ENCODE measurements at regions of chr16 and their contacts with region 1.

Region 1: GRCh38 chr16:85514595-85515318 is 98.4 kb upstream of the GSE1 start:
- DNase-seq: peak; percentile 56
- H3K4me3 ChIP-seq: no peak overlapping the region
- H3K27ac ChIP-seq: peak overlapping the region in 1 of 2 donors; percentile 62
- H3K4me1 ChIP-seq: peaks cover 10% of the 10 kb centered on the region
- H3K27me3 ChIP-seq: no peaks in the 10 kb centered on the region
- CTCF ChIP-seq: no peak
- POLR2A ChIP-seq: no peak

Region 2: GRCh38 chr16:85437166-85438055 is 77.3 kb before region 1 on chr16:
- intact Hi-C with region 1: loop called (anchors 10 kb)
- DNase-seq: peak; percentile 83
- H3K4me3 ChIP-seq: no peak overlapping the region
- H3K27ac ChIP-seq: peak overlapping the region; percentile 61 to 65
- H3K4me1 ChIP-seq: peaks cover 5% of the 10 kb centered on the region
- H3K27me3 ChIP-seq: no peaks in the 10 kb centered on the region
- CTCF ChIP-seq: peak in 1 of 4 experiments; percentile 31
- POLR2A ChIP-seq: peak; percentile 25

Region 3: DNA sequence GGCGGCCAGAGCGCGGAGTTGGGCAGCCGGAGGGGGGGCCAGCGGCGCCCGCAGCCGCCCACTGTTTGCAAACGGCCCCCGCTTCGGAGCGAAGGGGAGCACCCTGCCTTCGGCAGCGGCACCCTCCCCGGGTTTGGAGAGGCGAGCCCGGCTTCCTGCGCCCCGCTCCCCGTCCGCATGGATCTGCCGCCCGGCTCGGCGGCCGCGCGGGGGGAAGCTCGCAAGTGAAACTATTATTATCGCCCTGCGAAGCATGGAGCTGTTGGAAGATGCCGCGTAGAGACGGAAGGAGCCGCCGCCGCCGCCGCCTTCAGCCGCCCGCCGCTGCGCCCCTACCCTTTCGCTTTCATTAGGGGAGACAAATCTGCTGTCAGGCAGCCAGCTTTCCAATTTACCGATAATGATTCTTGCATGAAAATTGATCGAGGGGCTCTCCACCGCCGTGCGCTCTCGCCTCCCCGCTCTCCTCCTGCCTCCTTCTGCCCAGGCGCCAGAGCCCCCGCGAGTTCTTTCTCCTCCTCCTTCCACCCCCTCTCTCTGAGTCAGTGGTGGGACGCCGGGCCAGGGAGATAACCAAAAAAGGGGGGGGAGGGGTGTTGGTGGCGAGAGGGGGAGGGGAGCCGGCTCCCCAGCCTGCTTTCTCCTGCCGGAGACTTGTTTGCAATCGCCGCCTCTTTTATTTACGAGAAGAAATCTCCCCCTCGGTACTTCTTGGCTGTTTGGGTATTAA is 40.2 kb after region 1 on chr16:
- intact Hi-C with region 1: loop called (anchors 2 kb)
- DNase-seq: peak; percentile 38
- H3K4me3 ChIP-seq: peak overlapping the region; percentile 60 to 66
- H3K27ac ChIP-seq: peak overlapping the region; percentile 81 to 83
- H3K4me1 ChIP-seq: peaks cover 18% of the 10 kb centered on the region
- H3K27me3 ChIP-seq: no peaks in the 10 kb centered on the region
- CTCF ChIP-seq: no peak
- POLR2A ChIP-seq: peak; percentile 32

Region 4: DNA sequence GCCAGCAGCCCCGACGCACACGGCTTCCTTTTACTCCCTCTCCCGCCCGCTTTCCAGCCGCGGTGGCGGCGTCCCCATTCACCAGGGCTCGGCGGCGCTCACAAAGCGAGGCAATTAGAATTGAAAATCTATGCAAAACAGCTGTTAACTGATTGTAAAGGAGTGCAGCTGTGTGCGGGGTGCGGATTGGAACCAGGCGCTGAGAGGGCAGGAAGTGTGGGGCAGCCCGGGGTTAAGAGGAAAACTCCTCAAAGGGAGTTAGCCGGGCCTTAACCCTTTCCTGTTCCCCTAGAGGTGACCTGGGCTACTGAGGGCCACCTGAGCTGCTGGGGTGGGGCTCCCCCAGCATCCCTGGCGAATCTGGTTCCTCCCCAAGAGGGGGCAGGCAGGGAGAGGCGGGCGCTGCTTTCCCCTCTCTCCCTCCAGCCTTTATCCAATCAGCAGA is 92.6 kb after region 1 on chr16:
- intact Hi-C with region 1: no loop called
- DNase-seq: no peak
- H3K4me3 ChIP-seq: no peak overlapping the region
- H3K27ac ChIP-seq: no peak overlapping the region
- H3K4me1 ChIP-seq: peaks cover 35% of the 10 kb centered on the region
- H3K27me3 ChIP-seq: no peaks in the 10 kb centered on the region
- CTCF ChIP-seq: no peak
- POLR2A ChIP-seq: no peak